GM12878 (cell line): ENCODE measurements at regions of chr1 and their contacts with region 1.

Region 1: DNA sequence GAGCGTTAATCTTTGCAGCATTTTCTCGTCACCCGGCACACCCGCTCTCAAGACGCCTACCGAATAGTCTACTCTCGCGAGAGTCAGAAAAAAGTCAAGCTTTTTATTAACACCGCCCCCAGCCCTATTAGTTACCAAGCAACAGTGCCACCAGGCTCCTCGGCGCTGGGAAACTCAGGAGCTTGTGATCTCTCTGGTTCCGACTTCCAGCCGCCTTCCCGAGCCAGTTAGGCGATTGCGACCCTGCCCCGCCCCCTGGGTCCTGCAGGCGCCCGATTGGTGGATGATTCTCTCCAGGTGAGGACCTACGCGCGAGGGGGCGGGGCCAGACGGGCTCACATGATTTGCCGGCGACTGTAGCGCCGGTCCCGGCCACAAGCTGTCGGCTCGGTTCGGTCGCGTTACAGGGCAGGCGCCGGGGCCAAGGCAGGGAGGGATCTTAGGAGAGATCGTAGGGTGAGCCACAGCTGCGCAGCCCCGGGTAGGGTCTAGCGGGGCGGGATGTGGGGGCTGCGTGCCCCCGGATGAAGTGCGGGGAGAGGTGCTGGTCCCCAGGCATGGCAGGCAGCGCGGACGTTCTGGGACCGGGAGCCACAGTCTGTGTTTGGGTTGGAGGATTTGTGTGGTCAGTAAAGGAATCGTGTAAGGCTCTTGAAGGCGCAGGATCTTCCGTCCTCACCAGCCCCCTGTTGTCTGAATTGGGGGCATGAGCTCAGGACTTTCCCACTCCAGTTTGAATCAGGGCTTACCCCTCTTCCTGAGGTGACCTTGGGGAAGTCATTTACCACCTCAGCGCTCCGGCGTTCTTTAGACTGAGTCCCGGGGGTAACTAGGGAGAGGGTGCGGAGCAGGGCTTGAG is at the start of gene PFKFB2:
- DNase-seq: peak; percentile 66
- ATAC-seq: peak; percentile 87
- H3K4me3 ChIP-seq: peak within 1 kb of the TSS; percentile 82
- H3K27ac ChIP-seq: peak within 1 kb of the TSS; percentile 31; the same call in 1 of the 2 replicates
- H3K4me1 ChIP-seq: peaks cover 21% of the 10 kb centered on the region
- H3K27me3 ChIP-seq: no peaks in the 10 kb centered on the region
- CTCF ChIP-seq: peak in 2 of 3 experiments; percentile 18 to 31; a peak in 2 of 6 replicates
- EP300 ChIP-seq: no peak
- POLR2A ChIP-seq: peak; percentile 82
- RAD21 ChIP-seq: no peak
- polyA plus RNA-seq, gene PFKFB2: 0.40 to 0.47 TPM

Region 2: DNA sequence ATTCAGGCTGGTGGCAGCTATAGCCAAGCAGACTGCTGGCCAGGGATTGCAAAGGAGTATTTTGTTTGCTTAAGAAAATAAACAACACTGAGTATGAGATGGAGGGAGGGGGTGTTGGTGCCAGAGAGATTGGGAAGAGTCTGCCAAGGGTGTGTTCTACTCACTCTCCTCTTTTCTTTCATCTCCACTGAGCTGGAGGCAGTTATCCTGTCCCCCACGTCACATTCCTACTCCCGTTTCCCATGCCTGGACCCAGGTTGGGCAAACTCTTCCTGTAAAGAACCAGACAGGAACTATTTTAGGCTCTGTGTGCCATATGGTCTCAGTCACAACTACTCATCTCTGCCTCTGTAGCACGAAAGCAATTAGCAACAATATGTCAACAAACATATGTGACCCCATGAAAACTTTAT is 157.3 kb before region 1 on chr1:
- CTCF ChIA-PET with region 1: no interaction called
- POLR2A ChIA-PET with region 1: no interaction called
- RAD21 ChIA-PET with region 1: no interaction called
- SMC1A ChIA-PET with region 1: no interaction called
- in situ Hi-C with region 1: no loop called
- intact Hi-C with region 1: no loop called
- DNase-seq: no peak
- ATAC-seq: no peak
- H3K4me3 ChIP-seq: no peak overlapping the region
- H3K27ac ChIP-seq: no peak overlapping the region
- H3K4me1 ChIP-seq: no peaks in the 10 kb centered on the region
- H3K27me3 ChIP-seq: no peaks in the 10 kb centered on the region
- CTCF ChIP-seq: no peak
- EP300 ChIP-seq: no peak
- POLR2A ChIP-seq: no peak
- RAD21 ChIP-seq: no peak

Region 3: DNA sequence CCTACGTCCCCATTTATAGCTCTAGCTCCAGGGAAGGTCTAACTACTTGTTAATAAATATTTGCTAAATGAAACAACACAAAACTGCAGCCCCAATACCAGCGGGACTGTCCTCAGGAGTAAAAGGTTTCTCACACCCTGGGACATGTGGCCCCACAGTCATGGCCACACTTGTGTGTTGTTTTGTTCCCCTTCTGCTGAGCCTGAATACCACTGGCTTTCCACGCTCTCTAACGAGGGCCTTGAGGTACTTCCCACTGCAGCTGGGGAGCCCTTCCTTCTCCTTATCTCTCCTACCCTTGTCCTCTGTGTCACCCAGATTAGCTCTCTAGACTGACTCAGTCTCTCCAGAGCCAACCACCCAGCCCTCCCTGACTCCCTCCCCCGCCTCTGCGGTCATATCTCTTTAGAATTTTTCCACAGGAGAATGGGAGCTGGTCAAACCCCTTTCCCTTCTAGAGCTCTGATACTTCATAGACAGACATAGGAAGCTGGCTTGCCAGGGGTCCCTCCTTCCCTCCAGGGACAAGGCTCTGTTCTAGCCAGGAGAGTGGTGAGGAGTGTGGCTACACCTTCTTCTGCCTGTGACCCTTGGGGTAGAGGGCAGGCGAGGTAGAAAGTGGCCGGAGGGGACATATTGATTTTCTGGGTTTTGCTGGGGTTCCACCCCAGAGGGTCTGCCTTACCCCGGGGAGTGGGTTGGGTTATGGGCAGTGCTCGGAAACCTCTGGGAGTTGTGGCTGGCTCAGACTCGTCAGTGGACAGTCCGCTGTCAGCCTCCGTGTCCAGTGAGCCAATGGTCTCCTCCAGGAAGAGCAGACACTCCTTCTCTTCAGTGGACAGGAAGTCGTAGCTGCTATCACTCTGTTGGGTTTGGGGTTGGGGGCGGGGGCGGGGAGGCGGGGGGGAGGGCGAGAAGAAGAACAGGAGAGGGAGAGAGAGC is 28.7 kb before region 1 on chr1:
- CTCF ChIA-PET with region 1: no interaction called
- POLR2A ChIA-PET with region 1: no interaction called
- RAD21 ChIA-PET with region 1: no interaction called
- SMC1A ChIA-PET with region 1: no interaction called
- in situ Hi-C with region 1: no loop called
- intact Hi-C with region 1: no loop called
- DNase-seq: no peak
- ATAC-seq: no peak
- H3K4me3 ChIP-seq: no peak overlapping the region
- H3K27ac ChIP-seq: no peak overlapping the region
- H3K4me1 ChIP-seq: no peaks in the 10 kb centered on the region
- H3K27me3 ChIP-seq: peaks cover 0 to 5% of the 10 kb centered on the region in 2 experiments
- CTCF ChIP-seq: no peak
- EP300 ChIP-seq: no peak
- POLR2A ChIP-seq: no peak
- RAD21 ChIP-seq: no peak

Region 4: GRCh38 chr1:207040181-207040533 is 13.0 kb before region 1 on chr1:
- CTCF ChIA-PET with region 1: interaction called, 21 read pairs
- POLR2A ChIA-PET with region 1: no interaction called
- RAD21 ChIA-PET with region 1: no interaction called
- SMC1A ChIA-PET with region 1: no interaction called
- in situ Hi-C with region 1: no loop called
- intact Hi-C with region 1: no loop called
- DNase-seq: no peak
- ATAC-seq: no peak
- H3K4me3 ChIP-seq: no peak overlapping the region
- H3K27ac ChIP-seq: no peak overlapping the region
- H3K4me1 ChIP-seq: no peaks in the 10 kb centered on the region
- H3K27me3 ChIP-seq: no peaks in the 10 kb centered on the region
- CTCF ChIP-seq: no peak
- EP300 ChIP-seq: no peak
- POLR2A ChIP-seq: no peak
- RAD21 ChIP-seq: no peak

Region 5: DNA sequence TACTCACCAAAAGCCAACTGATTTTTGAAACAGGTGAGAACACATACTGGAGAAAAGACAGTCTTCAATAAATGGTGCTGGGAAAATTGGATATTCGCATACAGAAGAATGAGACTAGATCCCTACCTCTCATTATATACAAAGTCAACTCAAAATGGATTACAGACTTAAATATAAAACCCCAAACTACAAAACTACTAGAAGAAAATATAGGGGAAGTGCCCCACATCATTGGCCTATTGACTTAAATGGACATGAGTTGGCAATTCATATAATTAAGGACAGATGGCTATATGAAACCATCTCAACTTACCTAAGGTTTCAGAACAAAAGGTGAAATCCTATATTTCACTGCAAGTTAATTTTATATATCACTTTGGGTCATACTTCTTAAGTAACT is 110.9 kb after region 1 on chr1:
- CTCF ChIA-PET with region 1: no interaction called
- POLR2A ChIA-PET with region 1: no interaction called
- RAD21 ChIA-PET with region 1: no interaction called
- SMC1A ChIA-PET with region 1: no interaction called
- in situ Hi-C with region 1: no loop called
- intact Hi-C with region 1: no loop called
- DNase-seq: no peak
- ATAC-seq: no peak
- H3K4me3 ChIP-seq: no peak overlapping the region
- H3K27ac ChIP-seq: no peak overlapping the region
- H3K4me1 ChIP-seq: no peaks in the 10 kb centered on the region
- H3K27me3 ChIP-seq: no peaks in the 10 kb centered on the region
- CTCF ChIP-seq: no peak
- EP300 ChIP-seq: no peak
- POLR2A ChIP-seq: no peak
- RAD21 ChIP-seq: no peak

Region 6: GRCh38 chr1:207186503-207186902 is 133.4 kb after region 1 on chr1:
- CTCF ChIA-PET with region 1: no interaction called
- POLR2A ChIA-PET with region 1: no interaction called
- RAD21 ChIA-PET with region 1: no interaction called
- SMC1A ChIA-PET with region 1: no interaction called
- in situ Hi-C with region 1: no loop called
- intact Hi-C with region 1: no loop called
- DNase-seq: no peak
- ATAC-seq: no peak
- H3K4me3 ChIP-seq: no peak overlapping the region
- H3K27ac ChIP-seq: no peak overlapping the region
- H3K4me1 ChIP-seq: no peaks in the 10 kb centered on the region
- H3K27me3 ChIP-seq: no peaks in the 10 kb centered on the region
- CTCF ChIP-seq: no peak
- EP300 ChIP-seq: no peak
- POLR2A ChIP-seq: no peak
- RAD21 ChIP-seq: no peak

Region 7: GRCh38 chr1:207499573-207499972 is 446.4 kb after region 1 on chr1:
- CTCF ChIA-PET with region 1: interaction called, 17 read pairs
- POLR2A ChIA-PET with region 1: no interaction called
- RAD21 ChIA-PET with region 1: interaction called, 6 read pairs
- SMC1A ChIA-PET with region 1: interaction called, 5 read pairs
- in situ Hi-C with region 1: no loop called
- intact Hi-C with region 1: loop called (anchors 1 kb)
- DNase-seq: peak; percentile 64
- ATAC-seq: peak; percentile 81
- H3K4me3 ChIP-seq: no peak overlapping the region
- H3K27ac ChIP-seq: no peak overlapping the region
- H3K4me1 ChIP-seq: peaks cover 6% of the 10 kb centered on the region
- H3K27me3 ChIP-seq: no peaks in the 10 kb centered on the region; a peak in 1 of 4 replicates
- CTCF ChIP-seq: peak; percentile 64 to 85 (median 80)
- EP300 ChIP-seq: no peak
- POLR2A ChIP-seq: no peak
- RAD21 ChIP-seq: peak; percentile 96